Right cardiac atrium (tissue), 5 donors: ENCODE measurements at regions of chr4 and their contacts with region 1.

Region 1: DNA sequence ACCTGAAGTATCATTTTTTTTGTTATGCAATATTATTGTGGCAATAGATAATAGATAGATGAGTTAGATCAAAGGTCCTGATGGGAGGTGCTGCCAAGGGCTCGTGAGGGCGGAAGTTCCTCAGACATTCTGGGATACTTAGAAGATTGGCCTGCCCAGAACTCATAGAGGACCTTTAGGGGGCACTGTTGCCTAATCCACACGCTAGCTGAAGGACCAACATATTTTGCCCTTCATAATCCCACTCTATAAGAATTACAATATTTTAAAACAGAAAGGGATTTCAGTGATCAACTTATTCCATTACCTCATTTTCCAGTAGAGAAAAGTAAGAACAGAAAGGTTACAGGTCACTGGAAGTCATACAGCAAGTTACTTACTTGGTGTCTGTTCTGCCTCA is 22.9 kb upstream of the COX7B2 start:
- DNase-seq: peak in 2 of 3 donors; percentile 12 to 44
- ATAC-seq: peak; percentile 64 to 80
- H3K4me3 ChIP-seq: no peak overlapping the region
- H3K27ac ChIP-seq: no peak overlapping the region
- H3K4me1 ChIP-seq: no peaks in the 10 kb centered on the region
- H3K27me3 ChIP-seq: no peaks in the 10 kb centered on the region

Region 2: GRCh38 chr4:47032415-47033106 is 100.6 kb after region 1 on chr4:
- intact Hi-C with region 1: loop called in 3 of 4 experiments (anchors 5 to 10 kb)
- DNase-seq: peak; percentile 64 to 86 (median 83)
- ATAC-seq: peak; percentile 96 to 98
- H3K4me3 ChIP-seq: peak overlapping the region; percentile 29
- H3K27ac ChIP-seq: no peak overlapping the region
- H3K4me1 ChIP-seq: no peaks in the 10 kb centered on the region
- H3K27me3 ChIP-seq: no peaks in the 10 kb centered on the region